PC-3 (cell line): ENCODE measurements at regions of chr6 and their contacts with region 1.

Region 1: DNA sequence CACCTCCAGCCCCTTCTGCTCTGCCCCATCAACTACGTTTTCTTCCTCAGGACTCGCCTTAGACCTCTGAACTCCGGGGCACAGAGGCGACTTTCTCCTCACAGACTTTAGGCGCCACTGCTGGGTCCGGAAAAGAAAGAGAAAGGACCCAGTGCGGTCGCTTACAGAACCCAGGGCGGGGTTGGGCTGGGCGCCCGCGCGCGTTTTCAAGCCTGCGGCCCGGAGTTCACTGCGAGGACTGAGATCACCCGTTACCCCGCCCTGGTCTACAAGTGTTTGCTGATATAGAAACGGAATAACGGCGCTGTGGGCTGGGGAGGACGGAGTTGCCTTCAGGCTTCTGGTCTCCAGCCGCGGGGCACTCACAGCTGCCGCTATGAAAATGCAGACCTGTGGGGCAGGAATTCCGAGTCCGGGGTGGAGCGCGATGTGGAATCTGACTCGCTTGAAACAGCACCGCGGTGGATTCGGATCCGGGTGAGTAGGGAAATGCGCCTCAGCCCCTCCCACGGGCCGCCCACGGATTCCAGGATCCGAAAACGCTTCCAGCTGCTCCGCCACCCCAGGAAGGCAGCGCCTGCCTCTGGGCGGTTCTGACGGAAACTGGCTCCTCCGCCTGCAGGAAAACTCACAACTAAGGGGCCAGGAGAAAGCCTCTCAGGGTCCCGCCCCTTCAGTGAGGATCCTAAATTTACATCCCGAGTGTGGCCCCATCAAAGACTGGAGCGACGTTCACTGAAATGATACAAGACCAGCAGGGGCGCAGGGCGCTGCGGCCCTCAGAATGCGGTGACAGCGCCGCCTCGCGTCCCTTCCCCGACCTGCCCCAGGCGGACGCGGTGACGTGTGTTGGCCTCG is 29.4 kb downstream of the HLA-F start:
- DNase-seq: peak; percentile 94
- ATAC-seq: peak; percentile 68
- H3K4me3 ChIP-seq: peak overlapping the region; percentile 85
- H3K27ac ChIP-seq: peak overlapping the region; percentile 59
- H3K4me1 ChIP-seq: peaks cover 16% of the 10 kb centered on the region
- H3K27me3 ChIP-seq: no peaks in the 10 kb centered on the region
- CTCF ChIP-seq: peak; percentile 96

Region 2: GRCh38 chr6:29649701-29650673 is 102.7 kb before region 1 on chr6:
- CTCF ChIA-PET with region 1: interaction called, 4 read pairs
- POLR2A ChIA-PET with region 1: no interaction called
- intact Hi-C with region 1: loop called (anchors 1 kb)
- DNase-seq: peak; percentile 99
- ATAC-seq: peak; percentile 94
- H3K4me3 ChIP-seq: peak overlapping the region; percentile 72
- H3K27ac ChIP-seq: no peak overlapping the region
- H3K4me1 ChIP-seq: no peaks in the 10 kb centered on the region; the same call in none of the 2 replicates
- H3K27me3 ChIP-seq: no peaks in the 10 kb centered on the region
- CTCF ChIP-seq: peak; percentile 90

Region 3: DNA sequence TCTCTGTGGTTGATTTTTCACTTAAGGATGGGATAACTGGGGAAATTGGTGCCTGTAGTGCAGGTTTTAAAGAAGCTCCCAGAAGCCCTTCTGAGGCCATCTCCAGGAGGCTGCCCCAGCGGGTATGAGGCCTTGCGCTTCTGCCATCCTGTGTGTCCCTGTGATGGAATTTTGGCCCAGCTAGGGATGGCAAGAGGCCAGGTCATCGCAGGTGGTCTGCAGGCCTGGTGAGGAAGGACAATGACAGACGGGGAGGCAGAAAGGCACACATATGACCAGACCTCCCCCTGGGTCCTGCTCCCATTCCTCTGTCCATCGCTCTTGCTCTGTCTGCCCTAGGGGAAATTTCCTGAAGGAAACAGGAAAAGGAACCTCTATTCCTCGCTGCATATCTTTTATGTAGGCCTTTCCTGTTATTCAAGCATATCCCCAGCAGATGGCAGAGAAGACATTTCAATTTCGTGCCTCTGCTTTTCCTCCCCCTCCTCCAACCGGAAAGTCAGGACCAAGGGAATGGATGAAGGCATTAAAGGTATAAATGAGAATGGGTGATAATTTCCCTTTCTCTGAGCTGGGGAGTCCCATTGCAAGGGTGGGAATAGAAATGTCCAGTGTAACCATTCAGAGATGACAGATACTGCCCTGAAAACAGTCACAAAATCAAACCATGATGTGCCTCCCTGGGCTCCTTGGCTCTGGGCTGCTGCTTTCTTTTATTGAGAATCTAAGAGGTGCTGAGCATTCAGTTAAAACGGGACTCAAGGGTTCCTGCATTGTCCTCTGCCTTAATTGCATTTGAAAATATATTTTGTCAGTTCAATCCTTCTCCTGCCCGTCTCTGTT is 47.1 kb before region 1 on chr6:
- CTCF ChIA-PET with region 1: no interaction called
- POLR2A ChIA-PET with region 1: no interaction called
- intact Hi-C with region 1: loop called (anchors 1 kb)
- DNase-seq: peak; percentile 78
- ATAC-seq: peak; percentile 73
- H3K4me3 ChIP-seq: no peak overlapping the region
- H3K27ac ChIP-seq: no peak overlapping the region
- H3K4me1 ChIP-seq: no peaks in the 10 kb centered on the region
- H3K27me3 ChIP-seq: peaks cover 24% of the 10 kb centered on the region
- CTCF ChIP-seq: peak; percentile 78

Region 4: GRCh38 chr6:29737707-29738630 is 14.7 kb before region 1 on chr6:
- CTCF ChIA-PET with region 1: interaction called, 11 read pairs
- POLR2A ChIA-PET with region 1: no interaction called
- intact Hi-C with region 1: no loop called
- DNase-seq: peak; percentile 82
- ATAC-seq: peak; percentile 95
- H3K4me3 ChIP-seq: no peak overlapping the region
- H3K27ac ChIP-seq: no peak overlapping the region
- H3K4me1 ChIP-seq: no peaks in the 10 kb centered on the region
- H3K27me3 ChIP-seq: no peaks in the 10 kb centered on the region
- CTCF ChIP-seq: peak; percentile 90

Region 5: DNA sequence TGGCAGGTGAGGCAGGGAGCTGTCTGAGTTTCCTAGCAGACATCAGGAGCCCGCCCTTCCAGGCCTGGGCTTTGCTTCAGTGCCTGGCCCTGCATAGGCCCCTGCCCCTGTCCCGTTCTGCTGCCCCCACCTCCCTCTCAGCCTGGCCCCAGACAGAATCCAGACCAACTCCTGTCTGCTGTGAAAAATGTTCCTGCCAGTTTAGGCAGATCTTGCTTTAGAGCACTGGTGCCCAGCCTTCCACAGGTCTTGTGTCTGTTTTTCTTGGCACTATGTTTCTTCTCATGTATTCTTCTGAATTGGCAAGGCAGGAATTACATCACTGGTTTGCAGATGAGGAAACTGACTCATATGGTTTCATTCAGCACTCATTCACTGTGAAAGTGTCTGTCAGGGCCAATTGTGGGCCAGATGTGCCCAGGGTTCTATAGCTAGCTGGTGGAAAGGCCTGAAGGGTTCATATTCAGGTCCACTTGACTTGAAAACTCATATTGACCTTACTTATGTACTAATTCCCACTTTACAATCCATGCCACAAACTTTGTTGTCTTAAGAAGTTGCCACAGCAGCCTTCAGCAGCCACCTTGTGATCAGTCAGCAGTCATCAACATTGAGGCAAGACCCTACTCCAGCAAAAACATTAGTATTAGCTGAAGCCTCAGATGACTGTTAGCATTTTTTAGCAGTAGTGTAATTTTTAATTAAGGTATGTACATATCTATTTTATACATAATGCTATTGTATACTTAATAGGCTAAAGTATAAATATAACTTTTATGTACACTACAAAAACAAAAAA is 11.0 kb after region 1 on chr6:
- CTCF ChIA-PET with region 1: no interaction called
- POLR2A ChIA-PET with region 1: interaction called, 8 read pairs
- intact Hi-C with region 1: loop called (anchors 1 kb)
- DNase-seq: peak; percentile 73
- ATAC-seq: peak; percentile 69
- H3K4me3 ChIP-seq: no peak overlapping the region
- H3K27ac ChIP-seq: peak overlapping the region; percentile 29
- H3K4me1 ChIP-seq: peaks cover 27% of the 10 kb centered on the region
- H3K27me3 ChIP-seq: no peaks in the 10 kb centered on the region
- CTCF ChIP-seq: no peak

Region 6: DNA sequence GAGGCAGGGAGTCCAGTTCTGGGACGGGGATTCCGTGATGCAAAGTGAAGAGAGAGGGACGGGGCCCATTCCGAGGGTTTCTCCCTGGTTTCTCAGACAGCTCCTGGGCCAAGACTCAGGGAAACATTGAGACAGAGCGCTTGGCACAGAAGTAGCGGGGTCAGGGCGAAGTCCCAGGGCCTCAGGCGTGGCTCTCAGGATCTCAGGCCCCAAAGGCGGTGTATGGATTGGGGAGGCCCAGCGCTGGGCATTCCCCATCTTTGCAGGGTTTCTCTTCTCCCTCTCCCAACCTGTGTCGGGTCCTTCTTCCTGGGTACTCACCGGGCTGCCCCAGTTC is 39.1 kb after region 1 on chr6:
- CTCF ChIA-PET with region 1: no interaction called
- POLR2A ChIA-PET with region 1: interaction called, 3 read pairs
- intact Hi-C with region 1: loop called (anchors 1 kb)
- DNase-seq: peak; percentile 10
- ATAC-seq: peak; percentile 1; the same call in 1 of the 2 replicates
- H3K4me3 ChIP-seq: peak overlapping the region; percentile 82
- H3K27ac ChIP-seq: peak overlapping the region; percentile 65
- H3K4me1 ChIP-seq: peaks cover 23% of the 10 kb centered on the region
- H3K27me3 ChIP-seq: no peaks in the 10 kb centered on the region
- CTCF ChIP-seq: no peak

Region 7: DNA sequence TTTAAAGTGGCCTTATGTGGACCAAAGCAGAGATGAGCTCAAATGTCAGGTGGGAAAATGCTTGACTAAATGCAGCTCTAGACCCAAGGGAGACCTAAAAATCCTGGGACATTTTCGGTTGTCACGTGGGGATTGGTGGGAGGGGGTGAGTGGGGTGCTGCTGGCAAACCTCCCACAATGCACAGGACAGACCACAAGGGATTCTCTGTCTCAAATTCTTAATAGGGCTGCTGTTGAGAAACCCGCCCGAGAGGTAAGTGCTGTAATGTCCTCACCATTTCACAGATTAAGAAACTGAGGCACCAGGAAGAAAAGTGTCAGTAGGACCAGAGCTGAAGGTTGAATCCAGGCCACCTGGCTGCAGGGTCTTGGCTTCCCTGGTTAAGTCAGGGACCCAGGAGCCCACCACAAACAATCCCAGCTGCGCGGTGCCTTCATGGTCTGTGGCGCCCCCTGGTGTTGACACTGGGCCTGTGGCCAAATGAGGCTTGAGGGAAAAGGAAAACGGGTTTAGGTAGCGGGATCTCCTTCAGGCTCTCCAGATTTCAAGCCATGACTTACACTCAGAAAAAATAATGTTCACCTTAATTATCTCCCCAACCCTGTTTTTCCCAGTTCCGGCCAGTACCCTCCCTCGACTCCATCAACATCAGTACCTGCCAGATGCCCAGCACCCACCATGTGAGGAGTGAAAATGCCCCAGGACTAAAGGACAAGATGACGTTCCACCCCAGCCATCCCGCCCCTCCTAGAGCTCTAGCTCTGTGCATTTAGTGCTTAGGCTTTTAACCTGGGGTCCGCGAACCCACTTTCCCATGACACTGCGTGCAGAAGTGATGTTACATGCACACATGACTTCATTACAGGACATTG is 82.1 kb after region 1 on chr6:
- CTCF ChIA-PET with region 1: interaction called, 10 read pairs
- POLR2A ChIA-PET with region 1: no interaction called
- intact Hi-C with region 1: no loop called
- DNase-seq: peak; percentile 62
- ATAC-seq: peak; percentile 70
- H3K4me3 ChIP-seq: no peak overlapping the region
- H3K27ac ChIP-seq: no peak overlapping the region
- H3K4me1 ChIP-seq: no peaks in the 10 kb centered on the region
- H3K27me3 ChIP-seq: peaks cover 5% of the 10 kb centered on the region
- CTCF ChIP-seq: peak; percentile 90

Region 8: DNA sequence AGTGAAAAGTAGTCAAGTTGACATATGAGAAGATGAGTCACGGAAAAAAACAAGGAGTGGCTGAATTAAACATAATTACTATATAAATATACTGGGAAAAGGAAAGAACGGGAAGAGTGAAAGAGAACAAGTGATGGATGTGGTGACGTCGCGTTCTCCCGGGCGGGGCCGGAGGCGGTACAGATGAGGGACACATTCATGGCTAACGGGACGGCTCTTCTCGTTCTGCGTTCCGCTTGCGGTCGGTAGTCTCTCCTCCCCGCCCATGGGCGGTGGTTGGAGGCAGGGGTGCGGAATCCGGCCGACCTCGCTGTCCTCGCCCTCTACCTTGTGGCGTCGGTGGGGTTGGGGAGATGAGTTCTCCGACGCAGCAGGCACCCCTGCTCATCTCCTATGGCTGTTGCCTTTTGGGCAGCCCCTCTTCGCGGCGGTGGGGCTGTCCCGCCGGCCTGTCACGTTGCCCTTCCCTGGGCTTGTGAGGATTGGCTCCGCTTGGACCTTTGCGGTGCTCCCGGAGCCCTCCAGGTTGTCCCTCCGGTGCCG is 97.4 kb after region 1 on chr6:
- CTCF ChIA-PET with region 1: no interaction called
- POLR2A ChIA-PET with region 1: no interaction called
- intact Hi-C with region 1: no loop called
- DNase-seq: no peak
- ATAC-seq: no peak
- H3K4me3 ChIP-seq: no peak overlapping the region
- H3K27ac ChIP-seq: no peak overlapping the region
- H3K4me1 ChIP-seq: no peaks in the 10 kb centered on the region
- H3K27me3 ChIP-seq: no peaks in the 10 kb centered on the region
- CTCF ChIP-seq: no peak